GM10248 (cell line): ENCODE measurements at regions of chr10 and their contacts with region 1.

Region 1: DNA sequence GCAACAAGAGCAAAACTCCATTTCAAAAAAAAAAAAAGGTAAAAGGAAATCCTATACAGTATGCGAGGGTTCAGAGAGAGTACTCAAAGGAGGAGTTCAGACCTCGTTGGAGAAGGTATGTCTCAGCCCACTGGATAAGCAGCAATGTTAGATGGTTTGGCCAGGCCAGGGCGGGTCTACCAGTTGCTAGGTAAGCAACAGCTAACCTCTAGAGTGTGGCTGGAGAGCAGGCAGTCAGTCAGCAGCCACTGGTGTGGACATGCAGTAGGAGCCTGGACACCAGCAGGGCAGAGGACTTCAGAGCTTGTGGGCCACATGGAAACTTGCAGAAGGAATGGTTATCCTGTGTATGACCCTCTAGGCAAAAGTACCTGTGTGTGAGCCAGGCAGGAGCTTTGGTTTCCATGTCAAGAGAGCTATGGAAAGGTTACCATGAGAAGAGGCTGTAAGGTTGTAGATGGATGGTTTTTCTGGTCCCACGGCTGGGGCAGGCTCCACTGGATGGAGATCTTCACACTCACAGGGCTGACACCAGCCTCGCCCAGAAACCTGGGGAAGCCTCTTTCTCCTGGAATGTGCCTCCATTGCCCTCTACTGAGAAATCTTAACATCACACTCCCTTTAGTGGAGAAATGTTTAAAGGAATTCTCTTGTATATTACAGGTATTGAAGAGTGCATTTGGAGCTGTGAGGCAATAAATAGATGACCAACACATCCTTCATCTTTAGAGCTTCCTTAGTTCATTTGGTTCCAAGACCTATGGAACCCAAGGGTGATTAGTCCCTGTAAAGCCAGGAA is 63.6 kb downstream of the CCDC186 start:
- DNase-seq: no peak
- CTCF ChIP-seq: no peak

Region 2: GRCh38 chr10:114095559-114096337 is 14.6 kb before region 1 on chr10:
- CTCF ChIA-PET with region 1: interaction called, 15 read pairs
- POLR2A ChIA-PET with region 1: no interaction called
- DNase-seq: no peak
- CTCF ChIP-seq: no peak

Region 3: DNA sequence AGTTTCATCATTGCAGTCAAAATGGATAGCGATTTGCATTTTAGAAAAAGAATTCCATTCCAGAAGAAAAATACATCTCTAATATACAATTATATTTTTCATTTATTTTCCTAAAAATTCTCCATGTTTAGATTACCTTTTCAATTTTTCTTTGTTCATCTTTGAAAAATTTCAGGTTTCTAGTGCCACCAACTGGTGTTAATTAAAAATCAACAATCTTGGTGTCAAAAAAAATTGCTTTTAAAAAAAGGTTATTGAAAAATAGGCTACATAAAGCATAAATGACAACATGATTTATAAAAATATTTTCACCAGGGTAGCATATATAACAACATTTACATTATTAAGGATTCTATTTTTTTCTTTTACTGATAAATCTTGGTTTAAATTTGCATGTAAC is 10.7 kb after region 1 on chr10:
- CTCF ChIA-PET with region 1: interaction called, 4 read pairs
- POLR2A ChIA-PET with region 1: interaction called, 13 read pairs
- DNase-seq: no peak
- CTCF ChIP-seq: no peak

Region 4: GRCh38 chr10:114140036-114140435 is 29.7 kb after region 1 on chr10:
- CTCF ChIA-PET with region 1: no interaction called
- POLR2A ChIA-PET with region 1: no interaction called
- DNase-seq: no peak
- CTCF ChIP-seq: no peak